Naive thymus-derived CD4-positive, alpha-beta T cell (primary cell): ENCODE measurements at regions of chr6 and their contacts with region 1.

Region 1: GRCh38 chr6:26568601-26569432 is 27.9 kb upstream of the ABT1 start:
- DNase-seq: peak; percentile 96 to 99 (median 98)
- ATAC-seq: peak; percentile 84
- H3K4me3 ChIP-seq: peak overlapping the region; percentile 90
- H3K4me3 Mint-ChIP-seq: peak overlapping the region; percentile 90 to 100 (median 95)
- H3K27ac ChIP-seq: peak overlapping the region; percentile 74
- H3K27ac Mint-ChIP-seq: peak overlapping the region; percentile 96 to 100 (median 99)
- H3K4me1 ChIP-seq: peaks cover 0 to 3% of the 10 kb centered on the region in 2 donors
- H3K4me1 Mint-ChIP-seq: peaks cover 11 to 42% (median 26%) of the 10 kb centered on the region in 7 donors
- H3K27me3 ChIP-seq: no peaks in the 10 kb centered on the region
- H3K27me3 Mint-ChIP-seq: peaks cover 0 to 12% (median 0%) of the 10 kb centered on the region in 5 donors

Region 2: GRCh38 chr6:26322645-26323482 is 246.0 kb before region 1 on chr6:
- CTCF ChIA-PET with region 1: interaction called, 3 read pairs
- POLR2A ChIA-PET with region 1: interaction called, 34 read pairs
- intact Hi-C with region 1: loop called in 1 of 2 experiments (anchors 1 kb)
- DNase-seq: peak in 8 of 9 donors; percentile 67 to 85 (median 79)
- ATAC-seq: peak; percentile 72
- H3K4me3 ChIP-seq: peak overlapping the region; percentile 82
- H3K4me3 Mint-ChIP-seq: peak overlapping the region; percentile 64 to 92 (median 88)
- H3K27ac ChIP-seq: peak overlapping the region; percentile 60
- H3K27ac Mint-ChIP-seq: peak overlapping the region; percentile 44 to 93 (median 89)
- H3K4me1 ChIP-seq: peaks cover 5 to 8% of the 10 kb centered on the region in 2 donors
- H3K4me1 Mint-ChIP-seq: peaks cover 2 to 58% (median 36%) of the 10 kb centered on the region in 7 donors
- H3K27me3 ChIP-seq: no peaks in the 10 kb centered on the region
- H3K27me3 Mint-ChIP-seq: peaks cover 5 to 21% (median 17%) of the 10 kb centered on the region in 5 donors

Region 3: GRCh38 chr6:26401987-26402658 is 166.7 kb before region 1 on chr6 and contains the start of gene BTN3A1:
- CTCF ChIA-PET with region 1: interaction called, 4 read pairs
- POLR2A ChIA-PET with region 1: no interaction called
- intact Hi-C with region 1: loop called in 1 of 2 experiments (anchors 1 kb)
- DNase-seq: peak in 8 of 9 donors; percentile 65 to 85 (median 78)
- ATAC-seq: peak; percentile 93
- H3K4me3 ChIP-seq: peak within 1 kb of the TSS; percentile 95
- H3K4me3 Mint-ChIP-seq: peak within 1 kb of the TSS; percentile 94 to 100 (median 100)
- H3K27ac ChIP-seq: peak within 1 kb of the TSS; percentile 96
- H3K27ac Mint-ChIP-seq: peak within 1 kb of the TSS; percentile 97 to 100 (median 99)
- H3K4me1 ChIP-seq: peaks cover 35 to 37% of the 10 kb centered on the region in 2 donors
- H3K4me1 Mint-ChIP-seq: peaks cover 37 to 58% (median 53%) of the 10 kb centered on the region in 7 donors
- H3K27me3 ChIP-seq: no peaks in the 10 kb centered on the region
- H3K27me3 Mint-ChIP-seq: no peaks in the 10 kb centered on the region
- total RNA-seq, gene BTN3A1: 122 to 242 (median 235) TPM

Region 4: GRCh38 chr6:26421259-26422144 is 147.3 kb before region 1 on chr6:
- CTCF ChIA-PET with region 1: no interaction called
- POLR2A ChIA-PET with region 1: no interaction called
- intact Hi-C with region 1: loop called in 1 of 2 experiments (anchors 1 kb)
- DNase-seq: peak; percentile 11 to 71 (median 62)
- ATAC-seq: peak; percentile 96
- H3K4me3 ChIP-seq: peak overlapping the region; percentile 79
- H3K4me3 Mint-ChIP-seq: no peak overlapping the region
- H3K27ac ChIP-seq: peak overlapping the region; percentile 71
- H3K27ac Mint-ChIP-seq: peak overlapping the region in 2 of 9 donors; percentile 43 to 79
- H3K4me1 ChIP-seq: peaks cover 5 to 9% of the 10 kb centered on the region in 2 donors
- H3K4me1 Mint-ChIP-seq: peaks cover 0 to 16% (median 3%) of the 10 kb centered on the region in 7 donors
- H3K27me3 ChIP-seq: no peaks in the 10 kb centered on the region
- H3K27me3 Mint-ChIP-seq: no peaks in the 10 kb centered on the region

Region 5: DNA sequence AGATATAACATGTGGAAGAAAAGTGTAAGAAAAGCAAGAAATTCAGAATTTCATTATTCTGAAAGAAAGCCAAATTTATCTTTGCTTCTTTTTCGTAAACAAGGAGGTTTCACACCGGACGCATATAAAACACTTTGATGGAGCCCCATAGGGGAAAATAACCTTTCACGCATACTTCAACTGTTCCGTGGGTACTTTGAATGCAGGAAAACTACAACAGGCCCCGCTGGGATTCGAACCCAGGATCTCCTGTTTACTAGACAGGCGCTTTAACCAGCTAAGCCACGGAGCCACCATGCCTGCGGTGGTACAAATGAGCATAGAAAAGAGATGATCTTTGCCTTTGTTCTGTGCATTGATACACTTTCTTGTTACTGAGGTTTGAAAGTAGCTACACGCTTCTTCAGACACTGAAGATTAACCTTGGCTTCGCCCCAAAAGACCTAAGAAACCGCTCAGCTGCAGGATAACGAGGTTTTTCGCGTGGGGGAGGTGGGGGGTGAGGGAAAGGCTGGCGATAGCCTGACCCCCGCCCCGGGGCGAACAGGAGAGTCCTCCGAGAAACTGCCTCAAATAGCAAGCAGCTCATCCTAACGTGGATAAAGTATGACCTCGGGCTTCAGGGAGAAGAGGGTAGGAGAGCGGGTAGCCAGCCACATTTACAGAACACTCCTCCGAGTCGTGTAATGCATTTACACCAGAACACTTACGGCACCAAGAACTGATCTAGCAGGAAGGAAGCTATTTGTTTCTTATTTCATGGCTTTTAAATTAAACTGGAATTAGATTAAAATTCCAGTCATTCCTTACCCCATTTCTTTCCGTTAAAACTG is 35.9 kb before region 1 on chr6:
- CTCF ChIA-PET with region 1: interaction called, 7 read pairs
- POLR2A ChIA-PET with region 1: interaction called, 35 read pairs
- intact Hi-C with region 1: loop called (anchors 1 kb)
- DNase-seq: peak; percentile 67 to 94 (median 93)
- ATAC-seq: peak; percentile 57
- H3K4me3 ChIP-seq: peak overlapping the region; percentile 93
- H3K4me3 Mint-ChIP-seq: peak overlapping the region; percentile 83 to 99 (median 96)
- H3K27ac ChIP-seq: peak overlapping the region; percentile 72
- H3K27ac Mint-ChIP-seq: peak overlapping the region; percentile 88 to 98 (median 97)
- H3K4me1 ChIP-seq: peaks cover 14 to 23% of the 10 kb centered on the region in 2 donors
- H3K4me1 Mint-ChIP-seq: peaks cover 17 to 70% (median 45%) of the 10 kb centered on the region in 7 donors
- H3K27me3 ChIP-seq: no peaks in the 10 kb centered on the region
- H3K27me3 Mint-ChIP-seq: peaks cover 0 to 7% (median 0%) of the 10 kb centered on the region in 5 donors

Region 6: GRCh38 chr6:26553635-26554446 is 15.0 kb before region 1 on chr6:
- CTCF ChIA-PET with region 1: interaction called, 9 read pairs
- POLR2A ChIA-PET with region 1: interaction called, 83 read pairs
- intact Hi-C with region 1: loop called (anchors 1 kb)
- DNase-seq: peak; percentile 44 to 86 (median 83)
- ATAC-seq: peak; percentile 66
- H3K4me3 ChIP-seq: peak overlapping the region; percentile 75
- H3K4me3 Mint-ChIP-seq: no peak overlapping the region
- H3K27ac ChIP-seq: peak overlapping the region; percentile 65
- H3K27ac Mint-ChIP-seq: no peak overlapping the region
- H3K4me1 ChIP-seq: peaks cover 7 to 18% of the 10 kb centered on the region in 2 donors
- H3K4me1 Mint-ChIP-seq: peaks cover 12 to 35% (median 24%) of the 10 kb centered on the region in 7 donors
- H3K27me3 ChIP-seq: no peaks in the 10 kb centered on the region
- H3K27me3 Mint-ChIP-seq: peaks cover 0 to 2% (median 0%) of the 10 kb centered on the region in 5 donors

Region 7: DNA sequence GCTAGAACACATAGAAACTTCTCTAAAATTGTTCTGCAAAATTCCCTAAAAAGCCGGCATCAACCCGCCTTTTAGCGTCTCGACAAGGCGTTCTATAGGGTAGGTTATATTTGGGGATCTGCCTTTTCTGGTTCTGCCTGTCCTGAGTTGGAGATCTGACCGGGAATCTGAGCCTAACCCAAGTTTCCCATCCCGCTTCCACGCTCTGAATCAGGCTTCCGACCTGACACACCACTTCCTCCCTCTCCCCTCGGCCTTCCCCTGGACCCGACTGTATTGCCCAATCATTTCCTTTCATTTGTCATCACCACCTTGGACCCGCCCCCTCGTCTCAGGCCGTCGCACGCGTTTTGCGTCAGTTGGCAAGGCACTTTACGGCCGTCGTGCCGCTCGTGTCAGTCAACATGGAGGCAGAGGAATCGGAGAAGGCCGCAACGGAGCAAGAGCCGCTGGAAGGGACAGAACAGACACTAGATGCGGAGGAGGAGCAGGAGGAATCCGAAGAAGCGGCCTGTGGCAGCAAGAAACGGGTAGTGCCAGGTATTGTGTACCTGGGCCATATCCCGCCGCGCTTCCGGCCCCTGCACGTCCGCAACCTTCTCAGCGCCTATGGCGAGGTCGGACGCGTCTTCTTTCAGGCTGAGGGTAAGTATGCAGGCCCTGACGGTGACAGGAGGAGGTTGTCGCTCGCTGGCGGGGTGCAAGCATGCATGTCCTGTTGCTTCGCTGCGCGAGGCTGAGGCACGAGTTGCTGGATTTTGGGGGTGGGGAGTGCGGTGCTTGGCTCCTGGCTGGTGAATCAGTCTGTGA is 28.0 kb after region 1 on chr6 and contains the start of gene ABT1:
- CTCF ChIA-PET with region 1: interaction called, 25 read pairs
- POLR2A ChIA-PET with region 1: interaction called, 25 read pairs
- intact Hi-C with region 1: loop called (anchors 1 kb)
- DNase-seq: peak; percentile 87 to 96 (median 95)
- ATAC-seq: peak; percentile 95
- H3K4me3 ChIP-seq: peak within 1 kb of the TSS; percentile 81
- H3K4me3 Mint-ChIP-seq: no peak within 1 kb of the TSS
- H3K27ac ChIP-seq: peak within 1 kb of the TSS; percentile 89
- H3K27ac Mint-ChIP-seq: peak within 1 kb of the TSS in 1 of 9 donors; percentile 92
- H3K4me1 ChIP-seq: peaks cover 17 to 22% of the 10 kb centered on the region in 2 donors
- H3K4me1 Mint-ChIP-seq: peaks cover 5 to 20% (median 10%) of the 10 kb centered on the region in 7 donors
- H3K27me3 ChIP-seq: peaks cover 8 to 14% of the 10 kb centered on the region in 2 donors
- H3K27me3 Mint-ChIP-seq: peaks cover 3 to 28% (median 16%) of the 10 kb centered on the region in 5 donors
- total RNA-seq, gene ABT1: 23.3 to 37.5 (median 35.0) TPM

Region 8: DNA sequence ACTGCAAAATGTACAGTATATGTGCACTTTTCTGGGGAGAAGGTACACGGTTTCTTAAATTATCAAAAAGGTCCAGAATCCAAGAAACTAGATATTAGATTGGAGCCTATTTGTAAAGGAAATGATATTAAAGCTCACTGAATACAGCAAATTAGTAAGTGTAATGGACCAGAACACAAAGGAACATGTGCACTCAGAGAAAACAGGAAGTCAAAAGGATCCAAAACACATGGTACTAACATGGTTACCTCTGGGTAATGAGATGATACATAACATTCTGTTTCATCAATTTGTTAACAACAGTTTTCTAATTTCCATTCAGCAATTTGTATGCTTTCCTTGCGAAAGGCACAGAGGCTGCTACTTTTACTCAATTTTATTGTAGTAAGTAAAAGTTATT is 72.0 kb after region 1 on chr6:
- CTCF ChIA-PET with region 1: no interaction called
- POLR2A ChIA-PET with region 1: no interaction called
- intact Hi-C with region 1: no loop called
- DNase-seq: no peak
- ATAC-seq: no peak
- H3K4me3 ChIP-seq: no peak overlapping the region
- H3K4me3 Mint-ChIP-seq: no peak overlapping the region
- H3K27ac ChIP-seq: no peak overlapping the region
- H3K27ac Mint-ChIP-seq: no peak overlapping the region
- H3K4me1 ChIP-seq: no peaks in the 10 kb centered on the region
- H3K4me1 Mint-ChIP-seq: peaks cover 0 to 2% (median 0%) of the 10 kb centered on the region in 7 donors
- H3K27me3 ChIP-seq: no peaks in the 10 kb centered on the region
- H3K27me3 Mint-ChIP-seq: no peaks in the 10 kb centered on the region

Region 9: DNA sequence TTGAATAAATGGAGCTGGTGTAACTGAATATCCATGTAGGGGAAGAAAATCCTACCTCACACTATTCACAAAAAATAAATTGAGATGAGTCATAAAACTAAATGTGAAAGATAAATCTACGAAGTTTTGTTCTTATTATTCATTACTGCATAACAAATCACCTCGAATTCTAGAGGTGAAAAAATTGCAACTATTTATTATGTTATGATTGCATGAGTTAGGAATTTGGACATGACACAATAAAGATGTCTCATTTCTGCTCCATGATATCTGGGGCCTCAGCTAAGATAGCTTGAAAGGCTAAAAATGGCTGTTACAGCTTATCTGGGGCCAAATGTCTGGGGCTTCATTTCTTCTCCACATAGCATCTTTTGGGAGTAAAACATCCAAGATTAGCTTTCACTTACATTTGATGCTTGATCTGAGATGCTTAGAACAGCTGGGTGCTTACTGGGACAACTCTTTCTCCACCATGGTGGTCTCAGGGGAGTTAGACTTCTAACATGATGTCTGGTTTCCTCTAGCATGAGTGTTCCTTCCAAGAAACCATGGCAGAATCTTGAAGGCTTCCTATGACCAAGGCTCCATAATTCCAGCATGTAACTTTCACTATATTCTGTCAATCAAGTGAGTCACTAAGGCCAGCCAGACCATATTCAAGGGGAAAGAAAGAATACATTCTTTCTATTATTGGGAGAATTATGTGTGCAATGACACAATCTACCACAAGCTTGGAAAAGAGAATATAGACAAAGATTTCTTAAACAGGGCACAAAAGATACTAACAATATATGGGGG is 1418.3 kb after region 1 on chr6:
- CTCF ChIA-PET with region 1: no interaction called
- POLR2A ChIA-PET with region 1: no interaction called
- intact Hi-C with region 1: no loop called
- DNase-seq: no peak
- ATAC-seq: no peak
- H3K4me3 ChIP-seq: no peak overlapping the region
- H3K4me3 Mint-ChIP-seq: no peak overlapping the region
- H3K27ac ChIP-seq: no peak overlapping the region
- H3K27ac Mint-ChIP-seq: no peak overlapping the region
- H3K4me1 ChIP-seq: no peaks in the 10 kb centered on the region
- H3K4me1 Mint-ChIP-seq: peaks cover 0 to 1% (median 0%) of the 10 kb centered on the region in 7 donors
- H3K27me3 ChIP-seq: peaks cover 0 to 3% of the 10 kb centered on the region in 2 donors
- H3K27me3 Mint-ChIP-seq: peaks cover 38 to 72% (median 61%) of the 10 kb centered on the region in 5 donors